Left colon (tissue), 2 donors: ENCODE measurements at regions of chr10 and their contacts with region 1.

Region 1: GRCh38 chr10:70363971-70364771 is 18.3 kb downstream of the LRRC20 start:
- DNase-seq: peak; percentile 88 to 89
- ATAC-seq: peak; percentile 98

Region 2: GRCh38 chr10:70221030-70221429 is 143.1 kb before region 1 on chr10:
- intact Hi-C with region 1: loop called (anchors 1 to 10 kb)
- DNase-seq: no peak
- ATAC-seq: no peak

Region 3: GRCh38 chr10:70227548-70228320 is 136.4 kb before region 1 on chr10:
- intact Hi-C with region 1: loop called in 1 of 2 experiments (anchors 10 kb)
- DNase-seq: peak; percentile 73 to 86
- ATAC-seq: peak; percentile 85